Vagina (tissue), 2 donors: ENCODE measurements at regions of chr14 and their contacts with region 1.

Region 1: GRCh38 chr14:95523815-95524448 is 7.5 kb upstream of the SYNE3 start:
- DNase-seq: no peak
- H3K4me3 ChIP-seq: no peak overlapping the region
- H3K27ac ChIP-seq: no peak overlapping the region
- H3K4me1 ChIP-seq: peaks cover 51% of the 10 kb centered on the region
- H3K27me3 ChIP-seq: no peaks in the 10 kb centered on the region
- CTCF ChIP-seq: no peak
- POLR2A ChIP-seq: no peak

Region 2: DNA sequence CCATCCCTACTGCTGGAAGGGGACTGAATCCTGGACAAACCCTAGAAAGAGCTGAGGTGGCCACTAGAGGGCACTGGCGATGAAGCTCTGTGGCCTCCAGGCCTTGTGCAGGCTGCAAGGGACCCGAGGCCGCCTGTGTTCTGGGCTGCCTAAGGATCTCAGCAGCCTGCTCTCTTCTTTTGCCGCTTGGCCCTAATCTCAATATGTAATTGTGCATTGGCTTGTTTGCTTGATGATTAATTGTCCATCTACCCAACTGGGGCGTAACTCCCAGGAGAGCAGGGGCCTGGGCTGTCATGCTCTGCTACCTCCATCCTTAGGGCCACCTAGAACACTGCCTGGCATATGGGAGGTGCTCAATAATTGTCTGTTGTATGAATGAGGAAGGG is 81.3 kb before region 1 on chr14:
- intact Hi-C with region 1: loop called (anchors 2 kb)
- DNase-seq: no peak
- H3K4me3 ChIP-seq: no peak overlapping the region
- H3K27ac ChIP-seq: peak overlapping the region; percentile 36
- H3K4me1 ChIP-seq: no peaks in the 10 kb centered on the region
- H3K27me3 ChIP-seq: no peaks in the 10 kb centered on the region
- CTCF ChIP-seq: peak; percentile 76 to 87 (median 77)
- POLR2A ChIP-seq: no peak